ENCODE measurements at regions of chr10 and their contacts with region 1.

Region 1: GRCh38 chr10:48656241-48656913 is 28.3 kb upstream of the WDFY4 start:
- DNase-seq: peak; percentile 97
- H3K4me3 ChIP-seq: peak overlapping the region; percentile 69 to 71
- H3K27ac ChIP-seq: peak overlapping the region; percentile 69 to 74; a peak in 2 of 4 replicates
- H3K4me1 ChIP-seq: peaks cover 5 to 20% of the 10 kb centered on the region in 2 experiments; a peak in 2 of 4 replicates
- H3K27me3 ChIP-seq: no peaks in the 10 kb centered on the region
- CTCF ChIP-seq: peak; percentile 85
- EP300 ChIP-seq: peak in 1 of 2 experiments; percentile 26; a peak in 1 of 4 replicates
- RAD21 ChIP-seq: peak; percentile 93

Region 2: DNA sequence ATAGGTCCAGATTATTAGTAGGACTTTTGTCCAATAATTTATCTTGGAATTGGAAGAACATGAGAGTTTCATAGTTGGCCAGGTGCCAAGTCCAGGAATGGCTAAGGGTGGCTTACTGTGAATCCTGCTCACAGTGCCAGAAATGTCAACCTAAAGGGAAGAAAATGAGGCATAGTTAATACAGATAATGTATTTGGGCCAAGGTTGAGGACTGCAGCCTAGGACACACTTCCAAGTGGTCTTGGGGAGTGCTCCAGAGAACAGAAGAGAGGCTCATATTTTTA is 271.7 kb before region 1 on chr10:
- CTCF ChIA-PET with region 1: interaction called, 13 read pairs
- POLR2A ChIA-PET with region 1: no interaction called
- DNase-seq: no peak
- H3K4me3 ChIP-seq: no peak overlapping the region
- H3K27ac ChIP-seq: no peak overlapping the region
- H3K4me1 ChIP-seq: peaks cover 7 to 11% of the 10 kb centered on the region in 2 experiments; a peak in 3 of 4 replicates
- H3K27me3 ChIP-seq: no peaks in the 10 kb centered on the region
- CTCF ChIP-seq: no peak
- EP300 ChIP-seq: no peak
- RAD21 ChIP-seq: no peak

Region 3: GRCh38 chr10:48470115-48470892 is 186.1 kb before region 1 on chr10:
- CTCF ChIA-PET with region 1: interaction called, 10 read pairs
- POLR2A ChIA-PET with region 1: no interaction called
- DNase-seq: peak; percentile 59
- H3K4me3 ChIP-seq: no peak overlapping the region
- H3K27ac ChIP-seq: peak overlapping the region in 1 of 2 experiments; percentile 79; a peak in 2 of 4 replicates
- H3K4me1 ChIP-seq: peaks cover 0 to 39% of the 10 kb centered on the region in 2 experiments; a peak in 1 of 4 replicates
- H3K27me3 ChIP-seq: no peaks in the 10 kb centered on the region
- CTCF ChIP-seq: no peak
- EP300 ChIP-seq: peak in 1 of 2 experiments; percentile 42; a peak in 1 of 4 replicates
- RAD21 ChIP-seq: no peak

Region 4: DNA sequence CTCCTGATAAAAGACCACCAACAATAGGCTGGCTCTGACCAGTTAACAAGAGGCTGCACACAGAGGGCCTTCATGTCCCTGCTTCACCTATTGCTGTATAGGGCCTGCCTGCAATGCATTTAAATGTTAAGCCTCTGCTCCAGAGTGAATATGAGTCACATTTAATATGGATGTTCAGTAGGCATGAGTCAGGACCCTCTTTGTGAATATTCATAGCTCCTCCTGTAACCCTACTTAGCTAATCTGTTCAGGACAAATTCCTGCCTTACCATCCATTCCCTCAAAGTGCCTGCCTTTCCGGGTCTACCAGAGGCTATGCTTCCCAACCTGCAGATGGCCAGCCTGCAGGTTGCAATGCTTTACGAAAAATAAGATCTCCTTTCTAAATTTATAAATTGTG is 84.0 kb before region 1 on chr10:
- CTCF ChIA-PET with region 1: interaction called, 18 read pairs
- POLR2A ChIA-PET with region 1: no interaction called
- DNase-seq: no peak
- H3K4me3 ChIP-seq: no peak overlapping the region
- H3K27ac ChIP-seq: 0 out of 4 replicates have a peak overlapping the region, but pooled peaks of 1 of the 2 experiments have one; percentile 2
- H3K4me1 ChIP-seq: peaks cover 0 to 6% of the 10 kb centered on the region in 2 experiments; a peak in 1 of 4 replicates
- H3K27me3 ChIP-seq: no peaks in the 10 kb centered on the region
- CTCF ChIP-seq: no peak
- EP300 ChIP-seq: no peak
- RAD21 ChIP-seq: no peak

Region 5: DNA sequence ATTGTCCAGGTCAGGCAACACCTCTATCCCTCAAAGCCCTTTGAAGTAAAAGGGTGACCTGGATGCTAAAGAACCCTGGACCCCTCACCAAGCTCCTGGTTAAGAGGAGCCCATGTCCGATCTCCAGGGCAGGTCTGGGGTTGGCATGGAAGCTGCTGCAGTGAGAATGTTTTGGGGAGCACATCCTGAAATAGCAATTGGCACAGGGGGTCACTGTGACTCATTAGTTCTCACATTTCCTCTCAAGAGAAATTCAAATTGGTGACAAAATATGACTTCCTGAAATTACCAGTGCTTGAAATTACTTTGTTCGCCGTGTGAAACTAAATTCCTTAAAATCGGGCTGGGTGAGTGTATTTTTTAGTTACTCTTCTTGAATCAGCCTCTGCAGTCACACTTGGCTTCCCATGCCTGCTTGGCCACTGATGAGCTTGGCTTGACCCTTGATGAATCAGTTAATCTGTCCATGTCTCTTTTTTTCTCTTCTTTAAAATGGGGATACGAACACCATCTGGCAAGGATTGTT is 32.7 kb before region 1 on chr10:
- CTCF ChIA-PET with region 1: interaction called, 48 read pairs
- POLR2A ChIA-PET with region 1: interaction called, 3 read pairs
- DNase-seq: no peak
- H3K4me3 ChIP-seq: no peak overlapping the region
- H3K27ac ChIP-seq: no peak overlapping the region
- H3K4me1 ChIP-seq: peaks cover 0 to 27% of the 10 kb centered on the region in 2 experiments; a peak in 1 of 4 replicates
- H3K27me3 ChIP-seq: no peaks in the 10 kb centered on the region
- CTCF ChIP-seq: no peak
- EP300 ChIP-seq: no peak
- RAD21 ChIP-seq: no peak

Region 6: GRCh38 chr10:48773580-48773979 is 117.2 kb after region 1 on chr10:
- CTCF ChIA-PET with region 1: no interaction called
- POLR2A ChIA-PET with region 1: no interaction called
- DNase-seq: no peak
- H3K4me3 ChIP-seq: no peak overlapping the region
- H3K27ac ChIP-seq: no peak overlapping the region
- H3K4me1 ChIP-seq: no peaks in the 10 kb centered on the region
- H3K27me3 ChIP-seq: no peaks in the 10 kb centered on the region
- CTCF ChIP-seq: no peak
- EP300 ChIP-seq: no peak
- RAD21 ChIP-seq: no peak

Region 7: DNA sequence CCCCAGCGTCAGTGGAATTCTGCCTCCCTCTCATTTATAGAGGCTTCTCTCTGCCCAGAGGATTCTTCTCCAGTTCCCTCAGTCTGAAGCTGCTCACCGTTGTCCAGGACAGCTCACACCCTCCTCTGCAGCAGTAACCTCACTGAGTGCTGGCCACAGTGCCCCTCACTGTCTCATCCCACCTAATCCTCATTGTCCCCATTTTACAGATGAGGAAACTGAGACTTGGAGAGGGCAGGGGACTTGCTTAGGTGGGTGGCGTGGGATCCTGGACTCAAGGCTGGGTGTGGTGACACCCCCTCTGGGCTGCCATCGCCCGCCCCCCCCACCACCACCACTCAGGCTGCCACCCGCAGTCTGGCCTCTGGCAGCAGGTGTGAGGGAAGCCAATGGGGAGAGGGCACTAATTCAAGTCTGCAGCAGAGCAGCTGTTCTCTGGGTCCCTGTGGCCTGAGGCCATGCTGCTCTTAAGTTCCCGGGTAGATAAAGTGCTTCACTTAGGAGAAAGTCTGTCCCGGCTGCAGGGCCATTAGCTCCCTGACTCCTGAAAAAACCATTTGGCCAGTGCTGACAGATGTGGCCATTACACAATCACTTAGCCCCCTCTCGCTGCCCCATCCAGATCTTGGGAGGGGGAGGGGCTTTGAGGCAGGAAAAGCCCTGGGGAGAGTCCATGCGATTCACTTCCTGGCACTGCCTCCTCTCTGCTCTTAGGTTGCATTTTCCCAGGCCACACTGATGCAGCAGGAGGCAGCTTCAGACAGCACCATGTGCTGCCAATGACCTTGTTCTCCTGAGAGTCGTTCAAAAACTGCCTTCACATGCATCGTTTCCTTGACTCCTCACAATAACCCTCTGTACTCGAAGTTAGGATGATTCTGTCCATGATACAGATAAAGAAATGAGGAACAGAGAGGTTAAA is 703.2 kb after region 1 on chr10:
- CTCF ChIA-PET with region 1: interaction called, 22 read pairs
- POLR2A ChIA-PET with region 1: no interaction called
- DNase-seq: peak; percentile 85
- H3K4me3 ChIP-seq: no peak overlapping the region
- H3K27ac ChIP-seq: peak overlapping the region in 1 of 2 experiments; percentile 97; a peak in 2 of 4 replicates
- H3K4me1 ChIP-seq: peaks cover 0 to 31% of the 10 kb centered on the region in 2 experiments; a peak in 1 of 4 replicates
- H3K27me3 ChIP-seq: no peaks in the 10 kb centered on the region
- CTCF ChIP-seq: no peak
- EP300 ChIP-seq: peak in 1 of 2 experiments; percentile 79; a peak in 2 of 4 replicates
- RAD21 ChIP-seq: peak; percentile 51; the same call in 1 of the 2 replicates

Measured in SK-N-SH (cell line).